ENCODE measurements at regions of chr13 and their contacts with region 1.

Region 1: DNA sequence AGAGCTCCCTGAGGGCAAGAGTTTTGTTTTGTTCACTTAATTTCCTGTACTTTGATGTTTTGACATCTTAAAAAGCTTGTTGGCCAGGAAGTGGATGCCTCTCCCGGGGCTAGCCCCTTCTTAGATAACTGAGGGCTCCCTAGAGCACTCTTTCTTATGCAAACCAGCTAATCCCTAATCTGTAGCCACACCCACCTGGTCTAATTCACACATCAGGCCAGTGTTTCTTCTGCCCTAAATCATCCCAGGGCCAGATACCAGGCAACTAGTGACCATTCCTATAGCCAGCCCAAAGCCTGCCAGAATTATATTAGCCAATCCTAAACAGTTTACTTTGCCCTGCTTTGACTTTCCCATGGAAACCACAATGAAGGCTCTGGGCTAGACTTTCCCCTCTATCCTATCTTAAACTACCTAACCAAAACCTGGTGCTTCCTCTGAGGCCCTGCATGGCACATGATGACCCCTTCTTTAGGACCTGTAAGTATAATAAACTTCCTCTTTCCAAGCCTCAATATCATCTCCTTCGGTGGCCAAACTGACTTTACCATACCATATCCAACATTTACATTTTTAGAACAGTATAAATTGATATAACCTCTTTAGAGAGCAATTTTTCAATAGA is 24.8 kb downstream of the WBP4 start:
- DNase-seq: no peak
- ATAC-seq: peak; percentile 69
- H3K4me3 ChIP-seq: no peak overlapping the region
- H3K27ac ChIP-seq: no peak overlapping the region
- H3K4me1 ChIP-seq: no peaks in the 10 kb centered on the region
- H3K27me3 ChIP-seq: no peaks in the 10 kb centered on the region
- CTCF ChIP-seq: no peak
- POLR2A ChIP-seq: no peak
- RAD21 ChIP-seq: no peak

Region 2: GRCh38 chr13:41132512-41133152 is 46.6 kb after region 1 on chr13 and contains the start of gene KBTBD6:
- CTCF ChIA-PET with region 1: no interaction called
- POLR2A ChIA-PET with region 1: no interaction called
- dilution Hi-C with region 1: no loop called
- in situ Hi-C with region 1: no loop called
- intact Hi-C with region 1: loop called (anchors 5 kb)
- DNase-seq: peak; percentile 99
- ATAC-seq: peak; percentile 98
- H3K4me3 ChIP-seq: peak within 1 kb of the TSS; percentile 54
- H3K27ac ChIP-seq: peak within 1 kb of the TSS; percentile 77
- H3K4me1 ChIP-seq: peaks cover 13% of the 10 kb centered on the region
- H3K27me3 ChIP-seq: no peaks in the 10 kb centered on the region
- CTCF ChIP-seq: no peak
- POLR2A ChIP-seq: peak; percentile 26; the same call in 1 of the 2 replicates
- RAD21 ChIP-seq: no peak
- total RNA-seq, gene KBTBD6: 14.7 and 18.3 TPM in 2 replicates